CD4-positive, alpha-beta T cell (primary cell): ENCODE measurements at regions of chr9 and their contacts with region 1.

Region 1: GRCh38 chr9:82668689-82669199 is 394.2 kb downstream of the RASEF start:
- DNase-seq: no peak
- ATAC-seq: no peak
- H3K4me3 ChIP-seq: no peak overlapping the region
- H3K4me3 Mint-ChIP-seq: no peak overlapping the region
- H3K27ac ChIP-seq: no peak overlapping the region
- H3K27ac Mint-ChIP-seq: no peak overlapping the region
- H3K4me1 ChIP-seq: no peaks in the 10 kb centered on the region
- H3K4me1 Mint-ChIP-seq: no peaks in the 10 kb centered on the region
- H3K27me3 ChIP-seq: no peaks in the 10 kb centered on the region
- H3K27me3 Mint-ChIP-seq: no peaks in the 10 kb centered on the region
- CTCF ChIP-seq: no peak

Region 2: GRCh38 chr9:82651474-82651873 is 17.3 kb before region 1 on chr9:
- CTCF ChIA-PET with region 1: no interaction called
- POLR2A ChIA-PET with region 1: no interaction called
- intact Hi-C with region 1: loop called in 1 of 2 experiments (anchors 1 kb)
- DNase-seq: no peak
- ATAC-seq: no peak
- H3K4me3 ChIP-seq: no peak overlapping the region
- H3K4me3 Mint-ChIP-seq: no peak overlapping the region
- H3K27ac ChIP-seq: no peak overlapping the region
- H3K27ac Mint-ChIP-seq: no peak overlapping the region
- H3K4me1 ChIP-seq: no peaks in the 10 kb centered on the region
- H3K4me1 Mint-ChIP-seq: no peaks in the 10 kb centered on the region
- H3K27me3 ChIP-seq: no peaks in the 10 kb centered on the region
- H3K27me3 Mint-ChIP-seq: no peaks in the 10 kb centered on the region
- CTCF ChIP-seq: no peak